ENCODE measurements at regions of chr3 and their contacts with region 1.

Region 1: DNA sequence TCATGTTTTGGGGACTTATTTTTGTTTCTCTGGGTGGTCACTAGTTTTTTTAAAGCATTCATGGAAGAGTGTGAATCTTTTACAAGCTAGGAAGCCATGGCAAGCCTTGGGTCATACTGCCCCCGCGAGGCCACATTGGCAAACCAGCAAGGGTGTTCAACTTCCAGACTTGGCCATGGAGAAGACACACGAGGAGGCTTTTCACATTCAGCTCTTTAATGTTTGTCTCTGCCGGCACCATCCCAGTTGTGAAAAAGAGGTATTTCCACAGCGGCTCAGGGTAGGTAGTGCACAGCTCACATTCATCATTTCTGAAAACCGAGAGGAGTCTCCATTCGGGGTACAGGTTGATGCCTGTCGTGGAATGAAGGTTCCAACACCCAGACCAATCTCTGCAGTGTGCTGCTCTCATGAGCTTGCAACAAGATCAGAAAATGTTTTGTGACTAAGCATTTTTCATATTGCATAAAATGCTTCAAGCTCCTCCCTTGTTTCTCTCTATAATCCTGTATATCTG is 7.7 kb downstream of the CCR5 start:
- DNase-seq: peak; percentile 61
- H3K4me3 ChIP-seq: no peak overlapping the region
- H3K27ac ChIP-seq: no peak overlapping the region
- H3K4me1 ChIP-seq: peaks cover 16% of the 10 kb centered on the region
- H3K27me3 ChIP-seq: no peaks in the 10 kb centered on the region
- CTCF ChIP-seq: peak; percentile 76 to 81

Region 2: GRCh38 chr3:45938864-45939263 is 439.6 kb before region 1 on chr3:
- CTCF ChIA-PET with region 1: no interaction called
- dilution Hi-C with region 1: no loop called
- in situ Hi-C with region 1: loop called in 1 of 2 experiments (anchors 10 kb)
- intact Hi-C with region 1: loop called (anchors 2 kb)
- DNase-seq: peak; percentile 74
- H3K4me3 ChIP-seq: no peak overlapping the region
- H3K27ac ChIP-seq: no peak overlapping the region
- H3K4me1 ChIP-seq: no peaks in the 10 kb centered on the region
- H3K27me3 ChIP-seq: no peaks in the 10 kb centered on the region
- CTCF ChIP-seq: peak; percentile 93 to 95